B cell (primary cell): ENCODE measurements at regions of chr14 and their contacts with region 1.

Region 1: DNA sequence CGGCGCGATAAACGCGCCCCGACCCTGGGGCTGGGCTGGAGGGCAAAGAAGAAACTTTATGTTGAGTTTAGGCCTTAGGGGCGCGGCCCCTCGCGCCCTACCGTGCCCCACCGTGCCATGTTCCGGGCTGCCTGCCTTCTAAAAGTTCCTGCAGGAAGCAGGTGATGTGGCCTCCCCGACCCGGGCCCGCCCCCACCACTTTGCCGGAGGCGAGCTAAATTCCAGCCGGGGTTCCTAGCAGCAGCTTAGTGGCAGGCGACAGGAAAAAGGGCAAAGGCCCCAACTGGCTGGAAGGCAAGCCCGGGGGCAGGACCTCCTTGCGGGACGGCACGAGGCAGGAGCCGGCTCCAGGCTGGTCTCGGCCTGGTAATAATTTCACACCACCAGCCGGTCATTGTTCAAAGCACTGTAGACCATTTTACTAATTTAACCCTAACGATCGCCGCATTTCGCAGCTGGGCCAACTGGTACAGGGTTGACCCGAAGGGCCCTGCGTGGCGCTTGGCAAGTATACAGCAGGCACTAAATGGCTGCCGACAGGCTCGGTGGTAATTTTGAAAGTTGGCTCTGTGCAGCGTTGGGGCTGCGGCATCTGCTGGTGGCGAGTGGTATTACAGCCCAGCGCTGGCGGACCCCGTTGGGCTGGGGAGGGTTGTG is 895 bp upstream of the CCDC88C start:
- DNase-seq: peak; percentile 88
- ATAC-seq: peak; percentile 34
- H3K4me3 ChIP-seq: peak overlapping the region; percentile 30 to 97 (median 40)
- H3K4me3 Mint-ChIP-seq: peak overlapping the region; percentile 84
- H3K27ac ChIP-seq: peak overlapping the region; percentile 75 to 77
- H3K27ac Mint-ChIP-seq: peak overlapping the region; percentile 90
- H3K4me1 ChIP-seq: peaks cover 38% of the 10 kb centered on the region in 2 donors
- H3K4me1 Mint-ChIP-seq: peaks cover 38% of the 10 kb centered on the region
- H3K27me3 ChIP-seq: no peaks in the 10 kb centered on the region
- H3K27me3 Mint-ChIP-seq: no peaks in the 10 kb centered on the region
- CTCF ChIP-seq: peak; percentile 96

Region 2: GRCh38 chr14:91009501-91010152 is 408.9 kb before region 1 on chr14:
- CTCF ChIA-PET with region 1: no interaction called
- POLR2A ChIA-PET with region 1: no interaction called
- intact Hi-C with region 1: loop called (anchors 5 kb)
- DNase-seq: peak; percentile 90
- ATAC-seq: peak; percentile 90
- H3K4me3 ChIP-seq: peak overlapping the region in 3 of 5 experiments; percentile 12 to 49 (median 21)
- H3K4me3 Mint-ChIP-seq: peak overlapping the region; percentile 75
- H3K27ac ChIP-seq: peak overlapping the region; percentile 73 to 90
- H3K27ac Mint-ChIP-seq: peak overlapping the region; percentile 92
- H3K4me1 ChIP-seq: peaks cover 61 to 69% of the 10 kb centered on the region in 2 donors
- H3K4me1 Mint-ChIP-seq: peaks cover 52% of the 10 kb centered on the region
- H3K27me3 ChIP-seq: no peaks in the 10 kb centered on the region
- H3K27me3 Mint-ChIP-seq: no peaks in the 10 kb centered on the region
- CTCF ChIP-seq: no peak

Region 3: DNA sequence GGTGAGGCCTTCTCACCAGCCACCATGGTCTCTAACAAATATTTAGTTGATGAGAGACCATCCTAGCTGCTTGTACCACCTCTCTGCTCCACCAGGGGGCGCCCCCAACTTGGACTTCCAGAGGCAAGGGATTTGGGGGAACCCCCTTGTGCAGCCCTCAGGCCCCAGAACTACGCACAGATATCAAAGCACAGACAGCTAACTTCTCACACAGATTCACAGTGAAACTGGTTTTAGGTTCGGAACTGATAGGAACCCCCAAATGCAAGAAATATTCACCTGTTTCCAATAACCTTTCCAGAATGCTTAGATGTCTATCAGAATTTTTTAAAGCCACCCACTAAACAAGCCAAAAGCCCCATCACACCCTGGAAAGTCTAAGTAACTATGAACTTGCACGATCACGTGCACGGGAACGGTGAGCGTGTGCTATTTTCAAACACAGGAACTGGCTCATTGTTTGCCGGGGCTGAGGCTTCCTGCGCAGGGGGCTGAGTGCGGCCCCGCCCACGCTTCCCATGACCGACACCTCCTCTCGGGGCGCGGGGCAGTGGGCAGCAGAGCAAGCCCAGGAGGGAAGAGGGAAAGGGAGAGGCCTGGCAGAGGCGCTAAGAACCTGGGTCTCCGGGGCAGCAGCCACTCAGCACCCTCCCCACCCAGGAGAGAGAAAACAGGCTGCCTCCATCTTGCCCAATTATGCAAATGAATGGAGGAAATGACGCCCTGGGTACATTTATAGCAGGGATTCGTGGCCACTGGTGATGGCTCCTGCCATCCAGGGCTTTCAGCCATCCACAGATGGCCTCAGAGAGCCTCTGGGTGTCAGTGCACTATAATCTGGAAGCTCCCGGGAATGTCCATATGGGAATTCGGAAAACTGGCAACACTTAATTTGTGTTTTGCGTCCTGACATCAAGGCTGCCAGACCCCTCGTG is 94.6 kb before region 1 on chr14:
- CTCF ChIA-PET with region 1: interaction called, 289 read pairs
- POLR2A ChIA-PET with region 1: interaction called, 16 read pairs
- intact Hi-C with region 1: loop called (anchors 1 kb)
- DNase-seq: peak; percentile 95
- ATAC-seq: peak; percentile 78
- H3K4me3 ChIP-seq: peak overlapping the region; percentile 34 to 55 (median 45)
- H3K4me3 Mint-ChIP-seq: peak overlapping the region; percentile 93
- H3K27ac ChIP-seq: peak overlapping the region; percentile 99
- H3K27ac Mint-ChIP-seq: peak overlapping the region; percentile 100
- H3K4me1 ChIP-seq: peaks cover 43 to 57% of the 10 kb centered on the region in 2 donors
- H3K4me1 Mint-ChIP-seq: peaks cover 54% of the 10 kb centered on the region
- H3K27me3 ChIP-seq: no peaks in the 10 kb centered on the region
- H3K27me3 Mint-ChIP-seq: no peaks in the 10 kb centered on the region
- CTCF ChIP-seq: peak; percentile 95

Region 4: GRCh38 chr14:91367173-91368171 is 51.0 kb before region 1 on chr14:
- CTCF ChIA-PET with region 1: interaction called, 17 read pairs
- POLR2A ChIA-PET with region 1: interaction called, 3 read pairs
- intact Hi-C with region 1: loop called (anchors 1 kb)
- DNase-seq: peak; percentile 97
- ATAC-seq: peak; percentile 77
- H3K4me3 ChIP-seq: peak overlapping the region in 1 of 5 experiments; percentile 13
- H3K4me3 Mint-ChIP-seq: peak overlapping the region; percentile 84
- H3K27ac ChIP-seq: peak overlapping the region; percentile 88 to 98
- H3K27ac Mint-ChIP-seq: peak overlapping the region; percentile 98
- H3K4me1 ChIP-seq: peaks cover 78 to 94% of the 10 kb centered on the region in 2 donors
- H3K4me1 Mint-ChIP-seq: peaks cover 89% of the 10 kb centered on the region
- H3K27me3 ChIP-seq: no peaks in the 10 kb centered on the region
- H3K27me3 Mint-ChIP-seq: no peaks in the 10 kb centered on the region
- CTCF ChIP-seq: no peak

Region 5: GRCh38 chr14:91396959-91397815 is 21.3 kb before region 1 on chr14:
- CTCF ChIA-PET with region 1: interaction called, 28 read pairs
- POLR2A ChIA-PET with region 1: interaction called, 11 read pairs
- intact Hi-C with region 1: loop called (anchors 1 kb)
- DNase-seq: peak; percentile 50
- ATAC-seq: peak; percentile 55
- H3K4me3 ChIP-seq: peak overlapping the region in 4 of 5 experiments; percentile 1 to 52 (median 14)
- H3K4me3 Mint-ChIP-seq: peak overlapping the region; percentile 78
- H3K27ac ChIP-seq: peak overlapping the region; percentile 67 to 81
- H3K27ac Mint-ChIP-seq: peak overlapping the region; percentile 86
- H3K4me1 ChIP-seq: peaks cover 87% of the 10 kb centered on the region in 2 donors
- H3K4me1 Mint-ChIP-seq: peaks cover 91% of the 10 kb centered on the region
- H3K27me3 ChIP-seq: no peaks in the 10 kb centered on the region
- H3K27me3 Mint-ChIP-seq: no peaks in the 10 kb centered on the region
- CTCF ChIP-seq: no peak

Region 6: GRCh38 chr14:91510174-91511042 is 91.9 kb after region 1 on chr14 and contains the start of gene PPP4R3A:
- CTCF ChIA-PET with region 1: interaction called, 4 read pairs
- POLR2A ChIA-PET with region 1: interaction called, 3 read pairs
- intact Hi-C with region 1: loop called (anchors 1 kb)
- DNase-seq: peak; percentile 97
- ATAC-seq: peak; percentile 87
- H3K4me3 ChIP-seq: peak within 1 kb of the TSS; percentile 72 to 99 (median 84)
- H3K4me3 Mint-ChIP-seq: peak within 1 kb of the TSS; percentile 99
- H3K27ac ChIP-seq: peak within 1 kb of the TSS; percentile 97 to 100
- H3K27ac Mint-ChIP-seq: peak within 1 kb of the TSS; percentile 100
- H3K4me1 ChIP-seq: peaks cover 32% of the 10 kb centered on the region in 2 donors
- H3K4me1 Mint-ChIP-seq: peaks cover 37% of the 10 kb centered on the region
- H3K27me3 ChIP-seq: no peaks in the 10 kb centered on the region
- H3K27me3 Mint-ChIP-seq: no peaks in the 10 kb centered on the region
- CTCF ChIP-seq: no peak
- total RNA-seq, gene PPP4R3A: 184 and 189 TPM in 2 replicates